Activated CD4-positive, alpha-beta memory T cell treated with anti-CD3 and anti-CD28 coated beads, Interleukin-2, amount 10 ng/mL, durations not matched to agents 7 days and 5 days (primary cell): ENCODE measurements at regions of chr14 and their contacts with region 1.

Region 1: DNA sequence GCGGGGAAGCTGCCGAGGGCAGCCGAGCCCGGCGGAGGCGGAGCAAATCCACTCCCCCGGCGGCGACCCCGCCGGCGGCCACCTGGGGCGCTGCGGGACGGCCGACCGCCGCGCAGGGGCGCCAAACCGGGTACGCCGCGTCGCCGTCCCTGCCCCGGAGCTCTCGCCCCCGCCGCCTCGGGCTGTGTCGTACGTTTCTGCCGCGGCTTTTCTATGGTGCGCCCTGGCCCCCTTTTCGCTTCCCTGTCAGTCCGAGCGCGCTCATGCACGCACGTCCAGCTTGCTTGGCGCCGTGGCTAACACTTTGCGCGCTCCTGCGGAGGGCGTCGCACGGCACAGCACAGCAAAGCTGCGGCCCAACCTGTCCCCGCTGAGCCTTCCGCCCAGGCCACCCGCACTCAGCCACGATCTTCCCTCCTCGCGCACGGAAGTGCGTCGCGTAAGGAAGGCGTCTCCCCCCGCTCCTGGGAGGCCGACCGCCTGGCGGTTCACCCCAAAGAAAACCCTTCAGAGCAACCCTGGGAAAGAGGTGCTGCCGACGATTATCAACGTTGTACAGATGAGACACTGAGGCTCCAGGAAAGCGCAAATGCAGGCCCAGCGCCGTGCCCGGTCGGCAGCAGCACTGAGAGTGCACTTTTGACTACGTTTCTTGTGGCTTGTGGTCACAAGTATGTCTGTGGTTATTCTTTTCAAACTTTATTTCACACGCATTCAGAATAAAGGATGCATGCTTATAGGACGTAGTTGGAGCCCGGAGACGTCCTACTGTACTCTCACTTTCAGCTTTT is at the start of gene HECTD1:
- DNase-seq: peak; percentile 88
- H3K4me3 Mint-ChIP-seq: peak within 1 kb of the TSS; percentile 88
- H3K27ac Mint-ChIP-seq: peak within 1 kb of the TSS; percentile 100
- H3K4me1 Mint-ChIP-seq: peaks cover 50% of the 10 kb centered on the region
- H3K27me3 Mint-ChIP-seq: peaks cover 6% of the 10 kb centered on the region
- total RNA-seq, gene HECTD1: 85.1 to 92.3 TPM

Region 2: DNA sequence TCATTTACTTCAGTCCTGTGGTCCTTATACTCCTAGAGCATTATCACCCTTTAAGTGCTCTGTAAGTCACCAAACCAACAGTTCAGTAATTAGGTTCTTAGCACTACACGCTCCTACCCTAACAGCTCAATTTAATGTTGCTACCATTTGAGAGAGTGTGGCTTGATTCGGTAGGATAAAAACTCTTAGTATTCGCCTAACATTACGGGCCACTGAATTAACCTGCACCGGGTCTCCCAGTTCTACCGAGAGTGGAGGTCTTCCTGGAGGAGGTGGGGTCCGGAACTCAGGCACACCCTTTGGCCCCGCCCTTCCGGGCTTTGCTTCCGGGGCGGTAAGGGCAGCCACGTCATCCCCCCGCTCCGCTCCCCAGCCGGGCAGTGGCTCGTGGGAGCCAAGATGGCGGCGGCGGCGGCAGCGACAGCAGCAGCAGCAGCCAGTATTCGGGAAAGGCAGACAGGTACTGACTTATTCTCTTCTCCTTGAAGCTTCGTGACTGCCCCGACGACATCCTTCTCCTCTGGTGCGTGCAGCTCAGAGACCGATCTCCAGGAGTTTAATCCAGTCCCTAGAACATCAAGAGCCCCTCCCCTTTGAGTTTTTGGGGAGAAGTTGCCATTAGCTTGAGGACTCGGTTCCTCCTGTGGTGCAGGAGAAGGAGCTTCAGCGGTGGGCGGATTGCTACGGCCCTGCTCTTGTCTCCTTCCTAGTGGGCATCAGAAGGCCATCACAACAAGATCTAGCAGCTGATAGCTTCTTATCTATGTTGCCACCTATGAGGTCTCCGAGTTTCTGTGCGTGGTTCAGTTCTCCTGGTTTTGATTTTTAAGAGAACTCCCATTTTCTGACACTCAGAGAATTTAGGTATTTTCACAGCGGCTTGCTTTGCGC is 585.8 kb before region 1 on chr14 and contains the start of gene SCFD1:
- CTCF ChIA-PET with region 1: no interaction called
- POLR2A ChIA-PET with region 1: interaction called, 26 read pairs
- DNase-seq: peak; percentile 95
- H3K4me3 Mint-ChIP-seq: peak within 1 kb of the TSS; percentile 87
- H3K27ac Mint-ChIP-seq: peak within 1 kb of the TSS; percentile 93
- H3K4me1 Mint-ChIP-seq: peaks cover 41% of the 10 kb centered on the region
- H3K27me3 Mint-ChIP-seq: no peaks in the 10 kb centered on the region
- total RNA-seq, gene SCFD1: 61.8 to 65.4 TPM

Region 3: GRCh38 chr14:31127690-31128089 is 80.3 kb before region 1 on chr14:
- CTCF ChIA-PET with region 1: interaction called, 5 read pairs
- POLR2A ChIA-PET with region 1: interaction called, 46 read pairs
- DNase-seq: peak; percentile 41
- H3K4me3 Mint-ChIP-seq: no peak overlapping the region
- H3K27ac Mint-ChIP-seq: peak overlapping the region; percentile 10
- H3K4me1 Mint-ChIP-seq: peaks cover 38% of the 10 kb centered on the region
- H3K27me3 Mint-ChIP-seq: no peaks in the 10 kb centered on the region

Region 4: DNA sequence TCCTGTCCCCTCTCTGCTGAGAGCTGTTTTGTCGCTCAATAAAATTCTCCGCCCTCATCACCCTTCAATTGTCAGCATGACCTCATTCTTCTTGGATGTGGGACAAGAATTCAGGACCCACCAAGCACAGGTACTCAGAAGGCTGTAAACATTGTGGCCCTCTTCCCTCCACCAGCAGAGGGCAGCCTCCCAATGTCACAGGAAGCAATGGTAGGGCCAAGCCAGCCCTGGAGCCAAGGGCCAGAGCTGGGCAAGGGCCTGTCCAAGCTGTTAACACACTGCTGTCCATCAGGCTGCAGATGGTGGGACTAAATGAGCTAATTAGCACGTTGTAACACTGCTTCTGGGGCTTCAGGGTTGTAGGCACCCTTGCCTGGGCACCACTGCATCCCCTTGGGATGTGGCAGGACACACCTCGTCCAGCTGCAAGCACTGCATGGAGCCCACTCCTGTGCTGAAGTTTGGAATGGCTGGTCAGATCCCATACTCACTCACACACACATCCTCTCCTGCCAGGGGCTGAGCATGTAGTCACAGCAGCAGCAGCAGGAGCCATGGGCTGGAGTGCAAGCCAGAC is 62.3 kb after region 1 on chr14:
- CTCF ChIA-PET with region 1: interaction called, 8 read pairs
- POLR2A ChIA-PET with region 1: interaction called, 15 read pairs
- DNase-seq: peak; percentile 21
- H3K4me3 Mint-ChIP-seq: no peak overlapping the region
- H3K27ac Mint-ChIP-seq: no peak overlapping the region
- H3K4me1 Mint-ChIP-seq: peaks cover 21% of the 10 kb centered on the region
- H3K27me3 Mint-ChIP-seq: no peaks in the 10 kb centered on the region

Region 5: DNA sequence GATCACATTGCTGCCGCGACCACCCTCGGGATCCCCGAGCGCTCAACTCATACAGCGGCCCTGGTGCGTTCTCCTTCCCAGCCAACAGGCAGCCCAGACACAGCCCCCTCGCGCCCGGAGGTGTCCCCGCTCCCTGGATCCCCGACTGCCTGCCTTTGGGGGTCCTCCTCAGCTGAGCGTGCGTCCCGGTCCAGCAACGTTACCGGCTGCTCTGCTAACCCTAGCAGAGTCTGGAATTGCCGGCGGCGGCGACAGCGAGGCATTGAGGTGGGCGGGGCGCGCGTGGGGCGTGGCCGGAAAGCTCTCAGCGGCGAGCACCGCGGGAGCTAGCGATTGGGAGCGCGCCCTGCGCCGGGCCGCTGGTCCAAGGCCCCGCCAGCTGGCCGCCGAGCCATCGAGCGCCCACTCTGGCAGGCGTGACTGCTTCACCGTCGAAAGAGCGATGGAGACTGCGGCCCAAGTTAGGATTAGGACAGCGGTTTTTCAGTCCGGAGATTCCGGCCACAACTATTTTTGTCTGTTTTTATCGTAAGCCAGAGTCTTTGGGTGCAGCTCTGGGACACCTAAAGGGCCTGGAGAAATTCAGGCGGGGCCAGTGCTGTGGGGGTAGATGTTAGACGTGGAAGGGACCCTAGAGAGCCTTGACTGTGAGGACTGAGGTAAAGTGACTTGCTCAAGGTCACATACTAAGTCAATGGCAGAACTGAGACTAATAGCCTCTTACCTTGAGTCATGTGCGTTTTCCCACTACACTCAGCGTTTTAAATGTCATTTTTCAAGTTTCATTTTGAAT is 212.6 kb after region 1 on chr14 and contains the start of gene HEATR5A:
- CTCF ChIA-PET with region 1: interaction called, 9 read pairs
- POLR2A ChIA-PET with region 1: interaction called, 33 read pairs
- DNase-seq: peak; percentile 93
- H3K4me3 Mint-ChIP-seq: peak within 1 kb of the TSS; percentile 99
- H3K27ac Mint-ChIP-seq: peak within 1 kb of the TSS; percentile 77
- H3K4me1 Mint-ChIP-seq: peaks cover 19% of the 10 kb centered on the region
- H3K27me3 Mint-ChIP-seq: peaks cover 3% of the 10 kb centered on the region
- total RNA-seq, gene HEATR5A: 9.4 to 12.5 TPM